Activated T-helper 2 cell treated with anti-CD3 and anti-CD28 coated beads, Interferon-gamma antibody, Interleukin-2, Interleukin-4, amounts not matched to agents 10 μg/mL and 5 μg/mL and 100 μg/mL, durations not matched to agents 14 hours and 24 hours and 36 hours (primary cell): ENCODE measurements at regions of chr6 and their contacts with region 1.

Region 1: GRCh38 chr6:154928325-154928922 is 66.7 kb upstream of the TIAM2 start:
- DNase-seq: peak; percentile 36
- H3K4me3 Mint-ChIP-seq: no peak overlapping the region
- H3K27ac Mint-ChIP-seq: no peak overlapping the region
- H3K4me1 Mint-ChIP-seq: peaks cover 16% of the 10 kb centered on the region
- H3K27me3 Mint-ChIP-seq: no peaks in the 10 kb centered on the region

Region 2: DNA sequence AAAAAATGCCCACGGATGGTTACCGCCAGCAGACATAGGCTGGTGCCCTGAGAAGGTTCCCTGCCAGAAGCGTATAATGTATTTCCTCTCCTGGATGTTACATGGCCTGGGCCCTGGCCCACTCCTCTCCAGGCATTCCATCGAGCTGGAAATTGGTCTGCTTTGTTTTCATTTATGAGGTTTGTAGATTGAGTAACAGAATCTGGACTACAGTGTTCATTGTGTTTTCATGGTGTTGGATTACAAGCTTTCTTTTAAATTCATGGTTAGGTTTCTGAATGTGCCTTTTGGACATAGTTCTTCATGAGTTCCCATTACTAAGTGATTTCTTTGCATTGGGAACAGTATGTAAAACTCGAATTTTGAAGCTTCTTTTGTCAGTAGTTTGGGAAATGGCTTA is 73.1 kb after region 1 on chr6:
- intact Hi-C with region 1: no loop called
- DNase-seq: no peak
- H3K4me3 Mint-ChIP-seq: no peak overlapping the region
- H3K27ac Mint-ChIP-seq: no peak overlapping the region
- H3K4me1 Mint-ChIP-seq: peaks cover 14% of the 10 kb centered on the region
- H3K27me3 Mint-ChIP-seq: peaks cover 2% of the 10 kb centered on the region

Region 3: GRCh38 chr6:155248008-155249001 is 319.9 kb after region 1 on chr6:
- intact Hi-C with region 1: loop called (anchors 2 kb)
- DNase-seq: no peak
- H3K4me3 Mint-ChIP-seq: no peak overlapping the region
- H3K27ac Mint-ChIP-seq: no peak overlapping the region
- H3K4me1 Mint-ChIP-seq: no peaks in the 10 kb centered on the region
- H3K27me3 Mint-ChIP-seq: no peaks in the 10 kb centered on the region